AG04450 (cell line): ENCODE measurements at regions of chr7 and their contacts with region 1.

Region 1: DNA sequence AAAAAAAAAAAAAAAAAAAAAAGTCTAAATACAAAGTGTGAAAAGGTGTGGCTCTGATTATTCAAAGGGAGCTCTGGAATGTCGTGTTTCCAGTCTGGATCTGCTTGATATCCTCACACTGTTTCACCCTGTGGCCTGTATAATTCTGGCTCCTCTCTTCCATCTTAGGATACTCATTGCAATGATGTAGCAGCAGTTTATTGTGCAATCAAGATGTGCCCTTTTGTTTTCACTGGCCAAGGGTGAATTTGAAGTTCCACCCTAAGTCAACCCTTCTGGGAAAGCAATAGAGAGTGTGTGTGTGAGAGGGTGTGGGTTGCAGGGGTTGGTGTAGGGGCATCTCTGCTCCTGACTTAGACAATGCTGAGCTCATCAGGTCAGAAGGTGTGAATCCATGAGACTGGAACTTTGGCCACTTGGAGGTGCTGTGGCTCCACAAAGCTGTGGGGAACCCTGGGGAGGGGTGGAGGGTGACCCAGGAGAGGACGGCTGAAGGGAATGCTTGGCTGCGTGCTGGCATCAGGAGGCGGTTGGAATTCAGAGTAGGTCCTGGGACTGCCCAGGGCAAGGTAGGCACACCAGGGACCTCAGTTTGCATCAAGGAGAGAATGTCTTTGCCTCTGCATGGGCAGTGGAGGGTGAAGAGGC is 117.9 kb upstream of the PRSS58 start:
- DNase-seq: no peak
- H3K4me3 ChIP-seq: no peak overlapping the region
- H3K27ac ChIP-seq: no peak overlapping the region
- H3K27me3 ChIP-seq: no peaks in the 10 kb centered on the region
- CTCF ChIP-seq: no peak; the same call in 1 of the 2 replicates

Region 2: DNA sequence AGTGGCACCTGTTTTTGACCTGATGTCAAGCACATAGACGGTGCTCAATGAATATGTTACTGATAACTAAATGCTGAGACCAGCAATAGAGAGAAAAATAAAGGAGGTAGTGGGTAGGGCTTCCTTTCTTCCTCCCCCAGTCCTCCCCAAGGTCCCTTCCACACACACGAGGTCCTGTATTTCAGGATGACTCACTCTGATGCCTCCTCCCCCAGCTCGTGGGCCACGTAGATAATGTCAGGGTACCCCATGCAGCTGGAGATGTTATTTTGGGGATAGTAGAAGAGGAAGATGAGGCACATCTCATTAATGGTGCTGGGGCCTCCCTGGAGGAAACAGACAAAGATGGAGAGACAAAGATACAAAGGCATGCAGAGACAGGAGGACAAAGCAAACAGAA is 135.2 kb before region 1 on chr7:
- CTCF ChIA-PET with region 1: no interaction called
- POLR2A ChIA-PET with region 1: no interaction called
- DNase-seq: no peak
- H3K4me3 ChIP-seq: no peak overlapping the region
- H3K27ac ChIP-seq: no peak overlapping the region
- H3K27me3 ChIP-seq: no peaks in the 10 kb centered on the region
- CTCF ChIP-seq: no peak

Region 3: GRCh38 chr7:142357953-142358520 is 17.8 kb before region 1 on chr7:
- CTCF ChIA-PET with region 1: interaction called, 29 read pairs
- POLR2A ChIA-PET with region 1: no interaction called
- DNase-seq: peak; percentile 54
- H3K4me3 ChIP-seq: no peak overlapping the region
- H3K27ac ChIP-seq: no peak overlapping the region
- H3K27me3 ChIP-seq: no peaks in the 10 kb centered on the region
- CTCF ChIP-seq: peak; percentile 83